SK-N-SH (cell line): ENCODE measurements at regions of chr6 and their contacts with region 1.

Region 1: GRCh38 chr6:50145125-50145524 is 95.4 kb upstream of the DEFB112 start:
- DNase-seq: peak; percentile 12
- H3K4me3 ChIP-seq: peak overlapping the region in 1 of 2 experiments; percentile 26; a peak in 1 of 4 replicates
- H3K27ac ChIP-seq: no peak overlapping the region
- H3K4me1 ChIP-seq: no peaks in the 10 kb centered on the region
- H3K27me3 ChIP-seq: no peaks in the 10 kb centered on the region
- CTCF ChIP-seq: peak; percentile 69
- EP300 ChIP-seq: no peak
- RAD21 ChIP-seq: no peak

Region 2: GRCh38 chr6:49730251-49730650 is 414.9 kb before region 1 on chr6:
- CTCF ChIA-PET with region 1: no interaction called
- POLR2A ChIA-PET with region 1: no interaction called
- DNase-seq: no peak
- H3K4me3 ChIP-seq: no peak overlapping the region
- H3K27ac ChIP-seq: no peak overlapping the region
- H3K4me1 ChIP-seq: no peaks in the 10 kb centered on the region
- H3K27me3 ChIP-seq: no peaks in the 10 kb centered on the region
- CTCF ChIP-seq: no peak
- EP300 ChIP-seq: no peak
- RAD21 ChIP-seq: no peak

Region 3: DNA sequence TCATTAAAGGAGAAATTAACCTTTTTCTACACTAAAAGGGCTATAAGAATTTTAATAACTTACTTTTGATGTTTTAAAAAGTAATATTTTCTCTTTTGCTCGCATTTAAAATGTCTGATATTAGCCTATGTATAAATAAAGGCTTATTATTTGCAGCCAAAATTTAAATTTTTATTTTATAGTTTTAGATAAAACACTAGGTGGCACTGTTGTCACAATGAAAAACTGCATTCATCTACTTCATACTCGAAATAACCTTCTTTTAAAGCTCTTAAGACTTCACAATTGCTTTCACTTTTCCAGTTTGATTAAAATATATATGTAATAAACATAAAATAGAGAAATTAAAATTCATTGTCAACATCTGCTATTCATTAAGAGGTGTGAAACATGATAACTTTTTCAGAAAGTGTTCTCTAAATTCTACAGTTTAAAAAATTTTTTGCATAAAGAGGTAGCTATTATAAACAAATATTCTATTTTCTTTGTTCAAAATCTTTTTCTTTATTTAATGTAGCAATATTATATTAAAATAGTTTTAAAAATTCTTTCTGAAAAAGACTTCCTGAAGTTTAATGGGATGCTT is 16.6 kb before region 1 on chr6:
- CTCF ChIA-PET with region 1: interaction called, 19 read pairs
- POLR2A ChIA-PET with region 1: no interaction called
- DNase-seq: peak; percentile 21
- H3K4me3 ChIP-seq: no peak overlapping the region
- H3K27ac ChIP-seq: no peak overlapping the region
- H3K4me1 ChIP-seq: no peaks in the 10 kb centered on the region
- H3K27me3 ChIP-seq: no peaks in the 10 kb centered on the region
- CTCF ChIP-seq: peak; percentile 70
- EP300 ChIP-seq: no peak
- RAD21 ChIP-seq: peak; percentile 64

Region 4: DNA sequence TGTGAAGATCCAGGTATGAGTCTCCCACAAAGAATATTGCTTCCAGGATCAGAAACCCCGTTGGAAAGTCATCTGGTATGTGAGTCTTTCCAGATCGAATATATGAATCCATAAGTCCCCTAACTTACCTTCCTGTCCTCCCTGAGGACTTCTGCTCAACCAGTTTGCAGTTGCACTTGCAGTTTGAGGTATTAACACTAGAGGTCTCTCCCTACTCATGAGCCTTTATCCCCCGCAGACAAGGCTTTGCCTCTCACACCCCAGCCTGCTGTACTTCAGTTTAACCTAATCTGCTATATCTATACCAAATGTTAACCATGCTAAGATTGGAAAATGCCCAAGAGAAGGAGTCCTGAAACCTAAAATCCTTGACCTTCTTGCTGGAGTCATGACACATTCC is 39.9 kb after region 1 on chr6:
- CTCF ChIA-PET with region 1: no interaction called
- POLR2A ChIA-PET with region 1: no interaction called
- DNase-seq: peak; percentile 12
- H3K4me3 ChIP-seq: no peak overlapping the region
- H3K27ac ChIP-seq: no peak overlapping the region
- H3K4me1 ChIP-seq: no peaks in the 10 kb centered on the region
- H3K27me3 ChIP-seq: no peaks in the 10 kb centered on the region
- CTCF ChIP-seq: peak; percentile 39; the same call in 1 of the 2 replicates
- EP300 ChIP-seq: no peak
- RAD21 ChIP-seq: peak; percentile 53

Region 5: GRCh38 chr6:50198245-50198644 is 53.1 kb after region 1 on chr6:
- CTCF ChIA-PET with region 1: no interaction called
- POLR2A ChIA-PET with region 1: no interaction called
- DNase-seq: no peak
- H3K4me3 ChIP-seq: no peak overlapping the region
- H3K27ac ChIP-seq: no peak overlapping the region
- H3K4me1 ChIP-seq: no peaks in the 10 kb centered on the region
- H3K27me3 ChIP-seq: no peaks in the 10 kb centered on the region
- CTCF ChIP-seq: no peak
- EP300 ChIP-seq: no peak
- RAD21 ChIP-seq: no peak

Region 6: GRCh38 chr6:50259903-50260302 is 114.8 kb after region 1 on chr6:
- CTCF ChIA-PET with region 1: no interaction called
- POLR2A ChIA-PET with region 1: no interaction called
- DNase-seq: no peak
- H3K4me3 ChIP-seq: no peak overlapping the region
- H3K27ac ChIP-seq: no peak overlapping the region
- H3K4me1 ChIP-seq: no peaks in the 10 kb centered on the region
- H3K27me3 ChIP-seq: no peaks in the 10 kb centered on the region
- CTCF ChIP-seq: no peak
- EP300 ChIP-seq: no peak
- RAD21 ChIP-seq: no peak